Naive thymus-derived CD4-positive, alpha-beta T cell (primary cell): ENCODE measurements at regions of chr6 and their contacts with region 1.

Region 1: GRCh38 chr6:125918681-125919566 is 37.6 kb upstream of the HINT3 start:
- DNase-seq: peak in 7 of 9 donors; percentile 4 to 68 (median 40)
- ATAC-seq: peak; percentile 95
- H3K4me3 ChIP-seq: peak overlapping the region; percentile 34
- H3K4me3 Mint-ChIP-seq: peak overlapping the region in 9 of 10 donors; percentile 27 to 98 (median 70)
- H3K27ac ChIP-seq: peak overlapping the region; percentile 68
- H3K27ac Mint-ChIP-seq: peak overlapping the region; percentile 80 to 95 (median 87)
- H3K4me1 ChIP-seq: peaks cover 10 to 11% of the 10 kb centered on the region in 2 donors
- H3K4me1 Mint-ChIP-seq: peaks cover 15 to 60% (median 21%) of the 10 kb centered on the region in 7 donors
- H3K27me3 ChIP-seq: no peaks in the 10 kb centered on the region
- H3K27me3 Mint-ChIP-seq: no peaks in the 10 kb centered on the region

Region 2: DNA sequence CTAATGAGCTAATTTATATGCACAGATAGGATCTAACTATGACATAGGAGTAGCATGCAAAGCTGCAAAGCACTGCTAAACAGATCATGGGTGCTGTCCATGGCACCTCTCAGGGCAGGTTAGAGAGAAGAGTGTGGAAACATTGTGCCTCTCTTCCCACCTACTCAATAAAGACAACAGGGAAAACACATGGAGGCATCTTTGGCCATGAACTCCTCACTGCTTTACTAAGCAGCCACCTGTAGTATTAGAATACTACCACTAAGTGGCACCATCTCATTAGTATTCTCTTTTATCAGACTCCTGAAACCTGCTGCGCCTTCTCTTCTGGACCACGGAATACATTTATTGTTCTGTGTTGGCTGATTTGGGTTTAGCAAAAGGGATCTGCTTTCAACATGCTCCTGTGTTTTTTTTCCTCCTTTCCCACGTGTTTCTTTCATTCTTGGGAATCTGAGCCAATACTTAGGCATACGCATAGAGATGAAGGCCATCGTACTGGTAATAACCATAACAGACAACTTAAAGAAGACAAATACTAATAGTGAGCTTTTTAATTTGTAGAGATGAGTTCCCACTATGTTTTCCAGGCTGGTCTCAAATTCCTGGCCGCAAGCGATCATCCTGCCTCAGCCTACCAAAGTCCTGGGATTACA is 607.8 kb before region 1 on chr6:
- CTCF ChIA-PET with region 1: no interaction called
- POLR2A ChIA-PET with region 1: no interaction called
- intact Hi-C with region 1: no loop called
- DNase-seq: peak in 7 of 9 donors; percentile 14 to 64 (median 51)
- ATAC-seq: peak; percentile 90
- H3K4me3 ChIP-seq: no peak overlapping the region
- H3K4me3 Mint-ChIP-seq: no peak overlapping the region
- H3K27ac ChIP-seq: no peak overlapping the region
- H3K27ac Mint-ChIP-seq: no peak overlapping the region
- H3K4me1 ChIP-seq: no peaks in the 10 kb centered on the region
- H3K4me1 Mint-ChIP-seq: peaks cover 0 to 12% (median 0%) of the 10 kb centered on the region in 7 donors
- H3K27me3 ChIP-seq: no peaks in the 10 kb centered on the region
- H3K27me3 Mint-ChIP-seq: peaks cover 4 to 41% (median 5%) of the 10 kb centered on the region in 5 donors

Region 3: DNA sequence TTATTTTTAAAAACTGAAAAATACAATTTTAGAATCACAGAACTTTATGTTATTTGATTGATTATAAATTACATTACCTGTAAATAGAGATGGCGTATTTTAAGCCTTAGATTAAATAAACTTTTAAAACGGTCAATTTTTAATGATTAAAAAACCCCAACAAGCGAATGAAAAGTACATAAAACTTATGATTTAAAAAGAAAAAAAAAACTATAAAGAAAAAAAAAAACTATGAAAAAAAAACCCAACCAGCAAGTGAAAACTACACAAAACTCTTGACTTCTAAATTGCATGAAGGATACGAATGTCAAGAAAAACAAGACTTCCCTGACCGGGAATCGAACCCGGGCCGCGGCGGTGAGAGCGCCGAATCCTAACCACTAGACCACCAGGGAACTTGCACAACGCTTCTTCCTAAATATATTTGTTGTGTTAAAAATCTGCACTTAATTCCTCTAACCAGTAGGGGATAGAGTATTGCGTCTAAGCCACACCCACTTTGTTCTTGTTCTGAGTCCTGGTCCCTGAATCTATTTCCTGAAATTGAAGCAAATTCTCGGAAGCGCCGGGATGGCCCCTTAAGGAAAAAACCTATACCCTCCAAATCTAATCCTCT is 138.9 kb before region 1 on chr6:
- CTCF ChIA-PET with region 1: no interaction called
- POLR2A ChIA-PET with region 1: interaction called, 3 read pairs
- intact Hi-C with region 1: loop called in 1 of 2 experiments (anchors 1 kb)
- DNase-seq: peak; percentile 83 to 96 (median 94)
- ATAC-seq: peak; percentile 89
- H3K4me3 ChIP-seq: peak overlapping the region; percentile 84
- H3K4me3 Mint-ChIP-seq: no peak overlapping the region
- H3K27ac ChIP-seq: peak overlapping the region; percentile 77
- H3K27ac Mint-ChIP-seq: no peak overlapping the region
- H3K4me1 ChIP-seq: peaks cover 4 to 19% of the 10 kb centered on the region in 2 donors
- H3K4me1 Mint-ChIP-seq: peaks cover 5 to 27% (median 22%) of the 10 kb centered on the region in 7 donors
- H3K27me3 ChIP-seq: no peaks in the 10 kb centered on the region
- H3K27me3 Mint-ChIP-seq: peaks cover 0 to 28% (median 0%) of the 10 kb centered on the region in 5 donors

Region 4: DNA sequence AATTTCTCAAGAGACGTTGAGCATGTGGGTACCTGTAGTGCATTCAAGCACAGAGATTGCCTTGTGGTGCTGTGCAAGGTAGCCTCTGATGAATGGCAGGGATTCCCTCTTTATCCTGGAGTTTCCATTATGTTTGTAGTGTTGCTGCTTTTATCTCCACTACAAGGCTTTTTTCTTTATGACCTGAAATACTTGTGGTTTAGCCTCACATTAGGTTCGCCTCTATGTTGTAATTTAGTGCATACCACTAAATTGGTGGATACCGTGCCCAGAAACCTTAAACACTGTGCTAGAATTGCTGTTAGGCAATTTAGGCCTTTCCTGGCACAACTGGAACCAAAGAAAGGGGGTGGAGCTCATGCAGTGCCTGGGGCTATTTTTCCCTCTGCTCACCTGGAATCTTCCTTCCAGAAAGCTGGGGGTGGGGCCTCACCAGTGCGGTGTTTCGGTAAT is 51.4 kb before region 1 on chr6:
- CTCF ChIA-PET with region 1: no interaction called
- POLR2A ChIA-PET with region 1: no interaction called
- intact Hi-C with region 1: no loop called
- DNase-seq: no peak
- ATAC-seq: no peak
- H3K4me3 ChIP-seq: no peak overlapping the region
- H3K4me3 Mint-ChIP-seq: no peak overlapping the region
- H3K27ac ChIP-seq: no peak overlapping the region
- H3K27ac Mint-ChIP-seq: no peak overlapping the region
- H3K4me1 ChIP-seq: no peaks in the 10 kb centered on the region
- H3K4me1 Mint-ChIP-seq: peaks cover 0 to 9% (median 0%) of the 10 kb centered on the region in 7 donors
- H3K27me3 ChIP-seq: no peaks in the 10 kb centered on the region
- H3K27me3 Mint-ChIP-seq: no peaks in the 10 kb centered on the region

Region 5: GRCh38 chr6:125888989-125889656 is 29.8 kb before region 1 on chr6:
- CTCF ChIA-PET with region 1: no interaction called
- POLR2A ChIA-PET with region 1: no interaction called
- intact Hi-C with region 1: loop called in 1 of 2 experiments (anchors 2 kb)
- DNase-seq: peak in 5 of 9 donors; percentile 16 to 36 (median 19)
- ATAC-seq: no peak
- H3K4me3 ChIP-seq: no peak overlapping the region
- H3K4me3 Mint-ChIP-seq: no peak overlapping the region
- H3K27ac ChIP-seq: no peak overlapping the region
- H3K27ac Mint-ChIP-seq: peak overlapping the region in 1 of 9 donors; percentile 70
- H3K4me1 ChIP-seq: no peaks in the 10 kb centered on the region
- H3K4me1 Mint-ChIP-seq: peaks cover 0 to 5% (median 0%) of the 10 kb centered on the region in 7 donors
- H3K27me3 ChIP-seq: no peaks in the 10 kb centered on the region
- H3K27me3 Mint-ChIP-seq: no peaks in the 10 kb centered on the region

Region 6: DNA sequence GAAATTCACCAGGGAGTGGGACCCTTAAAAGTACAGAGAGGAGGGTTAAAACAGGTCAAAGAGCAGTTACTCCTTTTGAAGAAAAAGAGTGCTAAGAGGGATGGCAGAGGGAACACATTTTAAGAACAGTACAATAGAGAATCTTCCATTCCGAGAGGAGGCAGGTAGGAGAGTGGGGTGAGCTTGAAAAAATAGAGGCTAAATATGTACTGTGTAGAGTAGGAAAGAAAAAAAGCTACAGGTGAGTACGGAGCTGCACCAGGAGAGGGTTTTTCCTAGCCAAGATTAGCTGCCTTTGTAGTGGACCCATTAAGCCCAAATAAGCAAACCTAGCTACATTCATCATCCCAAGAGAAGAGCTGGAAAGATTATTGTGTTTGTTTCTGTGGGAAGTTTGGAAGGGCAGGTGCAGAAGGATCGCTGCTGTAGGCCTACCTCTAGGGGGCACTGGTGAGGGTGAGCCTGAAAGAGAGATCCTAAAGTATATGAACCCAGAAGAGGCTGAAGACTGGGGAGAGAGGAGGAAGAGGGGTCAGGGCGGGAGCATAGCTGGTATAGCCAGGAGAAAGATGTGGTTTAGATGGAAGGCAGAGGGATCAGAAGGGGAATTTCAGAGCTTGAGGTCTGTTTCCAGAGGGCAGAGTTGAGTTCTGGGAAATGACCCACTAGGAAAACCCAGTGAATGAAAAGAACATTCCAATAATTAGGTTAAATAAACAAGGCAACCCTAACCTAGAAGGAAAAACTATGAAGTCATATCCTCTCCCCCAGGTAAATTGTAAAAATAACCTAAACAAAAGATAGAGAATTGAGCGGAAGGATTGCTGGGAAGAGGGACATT is 12.5 kb before region 1 on chr6:
- CTCF ChIA-PET with region 1: interaction called, 5 read pairs
- POLR2A ChIA-PET with region 1: no interaction called
- intact Hi-C with region 1: loop called in 1 of 2 experiments (anchors 1 kb)
- DNase-seq: peak in 7 of 9 donors; percentile 18 to 49 (median 29)
- ATAC-seq: peak; percentile 82
- H3K4me3 ChIP-seq: no peak overlapping the region
- H3K4me3 Mint-ChIP-seq: no peak overlapping the region
- H3K27ac ChIP-seq: no peak overlapping the region
- H3K27ac Mint-ChIP-seq: peak overlapping the region in 3 of 9 donors; percentile 17 to 60 (median 21)
- H3K4me1 ChIP-seq: no peaks in the 10 kb centered on the region
- H3K4me1 Mint-ChIP-seq: peaks cover 0 to 48% (median 0%) of the 10 kb centered on the region in 7 donors
- H3K27me3 ChIP-seq: no peaks in the 10 kb centered on the region
- H3K27me3 Mint-ChIP-seq: no peaks in the 10 kb centered on the region

Region 7: DNA sequence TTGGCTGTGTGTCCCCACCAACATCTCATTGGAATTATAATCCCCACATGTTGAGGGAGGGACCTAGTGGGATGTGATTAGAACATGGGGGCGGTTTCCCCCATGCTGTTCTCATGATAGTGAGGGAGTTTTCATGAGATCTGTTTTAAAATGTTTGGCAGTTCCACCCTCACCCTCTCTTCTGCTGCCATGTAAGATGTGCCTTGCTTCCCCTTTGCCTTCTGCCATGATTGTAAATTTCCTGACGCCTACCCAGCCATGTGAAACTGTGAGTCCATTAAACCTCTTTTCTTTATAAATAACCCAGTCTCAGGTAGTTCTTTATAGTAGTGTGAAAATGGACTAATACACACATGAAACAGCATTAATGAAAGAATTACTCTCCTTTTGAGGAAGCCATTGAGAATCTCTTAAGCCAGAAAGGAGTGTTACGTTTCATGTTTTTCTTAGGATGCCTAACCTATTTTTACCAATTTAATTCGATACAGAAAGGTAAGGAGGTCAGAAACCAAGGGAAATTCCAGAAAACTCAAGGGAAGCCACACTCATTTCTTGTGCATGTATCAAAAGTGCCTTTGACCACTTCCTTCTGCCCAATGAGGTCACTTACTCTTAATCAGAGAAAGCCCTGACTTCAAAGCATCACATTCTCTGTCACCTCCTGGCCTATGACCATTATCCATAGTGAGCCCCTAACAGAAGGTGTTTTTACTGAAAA is 13.0 kb after region 1 on chr6:
- CTCF ChIA-PET with region 1: no interaction called
- POLR2A ChIA-PET with region 1: no interaction called
- intact Hi-C with region 1: loop called in 1 of 2 experiments (anchors 1 kb)
- DNase-seq: no peak
- ATAC-seq: peak; percentile 34
- H3K4me3 ChIP-seq: no peak overlapping the region
- H3K4me3 Mint-ChIP-seq: no peak overlapping the region
- H3K27ac ChIP-seq: no peak overlapping the region
- H3K27ac Mint-ChIP-seq: peak overlapping the region in 3 of 9 donors; percentile 9 to 24 (median 19)
- H3K4me1 ChIP-seq: no peaks in the 10 kb centered on the region
- H3K4me1 Mint-ChIP-seq: peaks cover 0 to 18% (median 0%) of the 10 kb centered on the region in 7 donors
- H3K27me3 ChIP-seq: no peaks in the 10 kb centered on the region
- H3K27me3 Mint-ChIP-seq: peaks cover 0 to 2% (median 0%) of the 10 kb centered on the region in 5 donors

Region 8: GRCh38 chr6:125956506-125957390 is 37.8 kb after region 1 on chr6 and contains the start of gene HINT3:
- CTCF ChIA-PET with region 1: interaction called, 3 read pairs
- POLR2A ChIA-PET with region 1: no interaction called
- intact Hi-C with region 1: loop called (anchors 1 kb)
- DNase-seq: peak; percentile 94 to 98 (median 97)
- ATAC-seq: peak; percentile 96
- H3K4me3 ChIP-seq: peak within 1 kb of the TSS; percentile 78
- H3K4me3 Mint-ChIP-seq: peak within 1 kb of the TSS in 1 of 10 donors; percentile 69
- H3K27ac ChIP-seq: peak within 1 kb of the TSS; percentile 98
- H3K27ac Mint-ChIP-seq: peak within 1 kb of the TSS in 3 of 9 donors; percentile 62 to 76 (median 73)
- H3K4me1 ChIP-seq: peaks cover 16 to 18% of the 10 kb centered on the region in 2 donors
- H3K4me1 Mint-ChIP-seq: peaks cover 0 to 22% (median 7%) of the 10 kb centered on the region in 7 donors
- H3K27me3 ChIP-seq: no peaks in the 10 kb centered on the region
- H3K27me3 Mint-ChIP-seq: peaks cover 0 to 7% (median 5%) of the 10 kb centered on the region in 5 donors
- total RNA-seq, gene HINT3: 7.7 to 12.4 (median 9.5) TPM

Region 9: GRCh38 chr6:126339796-126340609 is 421.1 kb after region 1 on chr6 and contains the start of gene CENPW:
- CTCF ChIA-PET with region 1: no interaction called
- POLR2A ChIA-PET with region 1: no interaction called
- intact Hi-C with region 1: loop called in 1 of 2 experiments (anchors 5 kb)
- DNase-seq: peak; percentile 84 to 96 (median 87)
- ATAC-seq: peak; percentile 98
- H3K4me3 ChIP-seq: peak within 1 kb of the TSS; percentile 80
- H3K4me3 Mint-ChIP-seq: no peak within 1 kb of the TSS
- H3K27ac ChIP-seq: peak within 1 kb of the TSS; percentile 33
- H3K27ac Mint-ChIP-seq: no peak within 1 kb of the TSS
- H3K4me1 ChIP-seq: peaks cover 6 to 12% of the 10 kb centered on the region in 2 donors
- H3K4me1 Mint-ChIP-seq: peaks cover 5 to 21% (median 12%) of the 10 kb centered on the region in 7 donors
- H3K27me3 ChIP-seq: no peaks in the 10 kb centered on the region
- H3K27me3 Mint-ChIP-seq: no peaks in the 10 kb centered on the region
- total RNA-seq, gene CENPW: 1.2 to 37.1 (median 3.9) TPM